IMR-90 (cell line): ENCODE measurements at regions of chr1 and their contacts with region 1.

Region 1: DNA sequence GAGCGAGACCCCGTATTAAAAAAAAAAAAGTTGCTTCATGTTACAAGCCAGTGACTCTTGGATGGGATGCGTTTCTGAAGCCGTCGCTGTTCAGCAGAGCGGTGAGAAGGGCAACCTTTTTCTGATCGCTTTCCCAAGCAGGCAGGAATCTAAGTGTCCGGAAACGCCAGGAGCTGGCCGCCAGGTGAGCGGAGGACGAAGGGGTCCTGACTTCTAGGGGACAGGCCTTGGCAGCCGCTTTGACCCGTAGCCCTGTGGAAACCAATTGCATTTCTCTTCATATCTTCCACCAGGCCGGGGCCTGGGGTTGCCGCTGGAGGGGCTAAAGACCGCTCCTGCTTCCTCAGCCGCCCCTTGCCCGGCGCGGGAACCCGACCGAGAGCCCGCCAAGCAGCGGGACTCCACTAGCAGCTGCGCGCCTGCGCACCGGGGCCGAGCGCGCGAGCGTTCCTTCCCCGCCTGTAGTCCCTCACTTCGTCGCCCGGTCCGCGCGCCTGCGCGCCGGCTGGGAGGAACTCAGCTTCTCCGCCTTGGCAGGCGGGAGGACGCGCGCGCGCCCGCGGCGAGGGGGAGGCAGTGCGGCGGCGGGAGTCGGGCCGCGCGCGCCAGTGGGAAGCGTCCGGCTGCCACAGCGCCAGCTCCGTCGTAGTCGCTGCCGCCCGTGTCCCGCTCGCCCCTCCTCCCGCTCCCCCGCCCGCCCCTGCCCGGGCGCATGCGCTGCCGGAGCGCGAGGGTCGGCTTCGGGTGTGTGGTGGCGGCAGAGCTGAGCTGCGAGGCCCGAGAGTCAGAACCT is at the start of gene SPEN:
- DNase-seq: peak; percentile 96
- ATAC-seq: peak; percentile 88
- H3K4me3 ChIP-seq: peak within 1 kb of the TSS; percentile 94
- H3K27ac ChIP-seq: peak within 1 kb of the TSS; percentile 88
- H3K4me1 ChIP-seq: no peaks in the 10 kb centered on the region
- H3K27me3 ChIP-seq: no peaks in the 10 kb centered on the region
- CTCF ChIP-seq: no peak
- POLR2A ChIP-seq: peak; percentile 61; the same call in 1 of the 2 replicates
- RAD21 ChIP-seq: peak; percentile 6; the same call in 1 of the 2 replicates
- total RNA-seq, gene SPEN: 15.8 and 20.3 TPM in 2 replicates

Region 2: DNA sequence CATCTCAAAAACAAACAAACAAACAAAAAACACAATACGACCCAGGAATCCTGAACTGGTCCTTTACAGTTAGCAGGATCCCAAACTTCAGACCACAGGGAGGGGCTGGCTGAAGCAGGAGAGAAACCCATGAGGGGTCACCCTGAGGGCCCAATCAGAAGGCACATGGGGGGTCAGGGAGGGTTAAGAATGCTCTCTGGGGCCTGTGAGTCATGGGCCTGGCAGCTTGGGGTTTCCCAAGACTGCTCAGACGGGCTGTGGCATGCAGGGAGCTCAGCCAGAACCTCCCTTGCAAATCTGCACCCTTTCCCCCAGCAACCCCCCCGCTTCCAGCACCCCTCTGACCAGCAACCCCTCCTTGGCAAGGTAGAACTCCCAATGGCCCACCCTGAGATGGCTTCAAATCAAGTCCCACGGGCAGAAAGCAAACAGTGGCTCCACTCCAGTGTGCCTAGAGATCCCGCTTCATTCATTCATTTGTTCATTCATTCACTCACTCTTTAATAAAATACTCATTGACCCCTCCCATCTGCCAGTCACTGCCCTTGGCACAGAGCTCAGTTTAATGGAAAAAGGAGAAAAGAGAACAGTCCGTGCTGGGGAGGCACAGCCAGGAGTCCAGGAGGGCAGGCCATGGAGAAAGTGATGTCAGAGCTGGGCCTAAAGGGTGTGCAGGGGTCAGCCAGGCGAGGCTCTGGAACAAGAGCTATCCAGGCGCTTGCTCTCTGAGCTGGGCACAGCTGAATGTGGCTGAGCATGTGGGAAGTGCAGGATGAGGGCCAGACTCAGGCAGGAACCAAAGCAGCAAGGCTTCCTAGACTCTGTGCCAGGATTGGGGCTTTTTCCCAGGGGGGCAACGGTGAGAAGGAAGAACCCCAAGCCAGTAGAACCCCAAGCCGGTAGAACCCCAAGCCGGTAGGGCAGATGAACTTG is 48.0 kb before region 1 on chr1:
- CTCF ChIA-PET with region 1: interaction called, 4 read pairs
- POLR2A ChIA-PET with region 1: no interaction called
- dilution Hi-C with region 1: no loop called
- in situ Hi-C with region 1: no loop called
- intact Hi-C with region 1: loop called (anchors 5 kb)
- DNase-seq: peak; percentile 96
- ATAC-seq: peak; percentile 86
- H3K4me3 ChIP-seq: no peak overlapping the region
- H3K27ac ChIP-seq: peak overlapping the region; percentile 81
- H3K4me1 ChIP-seq: peaks cover 43% of the 10 kb centered on the region
- H3K27me3 ChIP-seq: no peaks in the 10 kb centered on the region
- CTCF ChIP-seq: no peak
- POLR2A ChIP-seq: no peak
- RAD21 ChIP-seq: no peak

Region 3: GRCh38 chr1:15835741-15836510 is 11.4 kb before region 1 on chr1:
- CTCF ChIA-PET with region 1: no interaction called
- POLR2A ChIA-PET with region 1: interaction called, 3 read pairs
- dilution Hi-C with region 1: no loop called
- in situ Hi-C with region 1: no loop called
- intact Hi-C with region 1: loop called (anchors 1 kb)
- DNase-seq: peak; percentile 99
- ATAC-seq: peak; percentile 82
- H3K4me3 ChIP-seq: peak overlapping the region; percentile 68
- H3K27ac ChIP-seq: peak overlapping the region; percentile 85
- H3K4me1 ChIP-seq: peaks cover 2% of the 10 kb centered on the region; the same call in 1 of the 2 replicates
- H3K27me3 ChIP-seq: no peaks in the 10 kb centered on the region
- CTCF ChIP-seq: no peak
- POLR2A ChIP-seq: peak; percentile 85
- RAD21 ChIP-seq: no peak

Region 4: GRCh38 chr1:15885701-15886610 is 38.7 kb after region 1 on chr1:
- CTCF ChIA-PET with region 1: no interaction called
- POLR2A ChIA-PET with region 1: no interaction called
- dilution Hi-C with region 1: no loop called
- in situ Hi-C with region 1: no loop called
- intact Hi-C with region 1: loop called (anchors 5 kb)
- DNase-seq: peak; percentile 86
- ATAC-seq: peak; percentile 99
- H3K4me3 ChIP-seq: peak overlapping the region; percentile 40
- H3K27ac ChIP-seq: peak overlapping the region; percentile 90
- H3K4me1 ChIP-seq: peaks cover 4% of the 10 kb centered on the region
- H3K27me3 ChIP-seq: no peaks in the 10 kb centered on the region
- CTCF ChIP-seq: peak; percentile 35
- POLR2A ChIP-seq: no peak
- RAD21 ChIP-seq: peak; percentile 25; the same call in 1 of the 2 replicates

Region 5: GRCh38 chr1:15902882-15903281 is 55.6 kb after region 1 on chr1:
- CTCF ChIA-PET with region 1: interaction called, 3 read pairs
- POLR2A ChIA-PET with region 1: no interaction called
- dilution Hi-C with region 1: no loop called
- in situ Hi-C with region 1: no loop called
- intact Hi-C with region 1: loop called (anchors 5 kb)
- DNase-seq: peak; percentile 91
- ATAC-seq: peak; percentile 92
- H3K4me3 ChIP-seq: no peak overlapping the region
- H3K27ac ChIP-seq: no peak overlapping the region
- H3K4me1 ChIP-seq: peaks cover 12% of the 10 kb centered on the region
- H3K27me3 ChIP-seq: no peaks in the 10 kb centered on the region
- CTCF ChIP-seq: no peak
- POLR2A ChIP-seq: no peak
- RAD21 ChIP-seq: no peak

Region 6: DNA sequence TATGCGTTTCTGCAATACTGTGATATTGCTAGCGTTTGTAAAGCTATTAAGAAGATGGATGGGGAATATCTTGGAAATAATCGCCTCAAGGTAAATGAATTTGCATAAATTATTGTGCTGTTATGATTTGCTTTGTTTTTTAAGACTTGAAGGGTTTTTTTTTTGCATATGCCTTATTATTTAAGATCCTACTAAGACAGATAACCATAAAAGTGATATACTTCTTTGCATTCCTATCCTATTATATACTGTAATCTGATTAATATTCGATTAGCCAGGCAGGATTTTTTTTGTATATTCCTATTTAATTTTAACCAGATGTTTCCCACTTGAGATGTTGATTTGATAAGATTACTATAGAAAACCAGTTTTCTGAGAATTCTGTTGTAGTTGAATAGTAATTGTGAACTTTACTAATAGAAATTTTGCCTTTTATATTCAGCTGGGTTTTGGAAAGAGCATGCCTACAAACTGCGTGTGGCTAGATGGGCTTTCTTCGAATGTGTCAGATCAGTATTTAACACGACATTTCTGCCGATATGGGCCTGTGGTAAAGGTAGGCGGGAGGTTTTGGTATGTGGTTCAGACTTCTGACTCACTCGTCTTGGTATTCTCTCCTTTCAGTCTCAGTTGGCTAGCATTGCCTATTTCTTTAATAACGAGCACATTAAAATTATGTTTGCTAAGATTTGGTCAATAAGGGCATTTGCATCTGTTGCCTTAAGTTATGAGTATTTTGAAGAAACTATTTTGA is 71.8 kb after region 1 on chr1:
- CTCF ChIA-PET with region 1: no interaction called
- POLR2A ChIA-PET with region 1: interaction called, 4 read pairs
- dilution Hi-C with region 1: no loop called
- in situ Hi-C with region 1: no loop called
- intact Hi-C with region 1: loop called (anchors 5 kb)
- DNase-seq: peak; percentile 84
- ATAC-seq: peak; percentile 69
- H3K4me3 ChIP-seq: no peak overlapping the region
- H3K27ac ChIP-seq: no peak overlapping the region
- H3K4me1 ChIP-seq: peaks cover 12% of the 10 kb centered on the region
- H3K27me3 ChIP-seq: no peaks in the 10 kb centered on the region
- CTCF ChIP-seq: no peak
- POLR2A ChIP-seq: no peak
- RAD21 ChIP-seq: no peak

Region 7: GRCh38 chr1:15994590-15995351 is 147.5 kb after region 1 on chr1:
- CTCF ChIA-PET with region 1: no interaction called
- POLR2A ChIA-PET with region 1: no interaction called
- dilution Hi-C with region 1: no loop called
- in situ Hi-C with region 1: no loop called
- intact Hi-C with region 1: loop called (anchors 1 kb)
- DNase-seq: peak; percentile 56
- ATAC-seq: peak; percentile 99
- H3K4me3 ChIP-seq: no peak overlapping the region
- H3K27ac ChIP-seq: no peak overlapping the region
- H3K4me1 ChIP-seq: peaks cover 2% of the 10 kb centered on the region; the same call in 1 of the 2 replicates
- H3K27me3 ChIP-seq: peaks cover 13% of the 10 kb centered on the region; the same call in 1 of the 2 replicates
- CTCF ChIP-seq: peak; percentile 90
- POLR2A ChIP-seq: no peak
- RAD21 ChIP-seq: peak; percentile 91

Region 8: DNA sequence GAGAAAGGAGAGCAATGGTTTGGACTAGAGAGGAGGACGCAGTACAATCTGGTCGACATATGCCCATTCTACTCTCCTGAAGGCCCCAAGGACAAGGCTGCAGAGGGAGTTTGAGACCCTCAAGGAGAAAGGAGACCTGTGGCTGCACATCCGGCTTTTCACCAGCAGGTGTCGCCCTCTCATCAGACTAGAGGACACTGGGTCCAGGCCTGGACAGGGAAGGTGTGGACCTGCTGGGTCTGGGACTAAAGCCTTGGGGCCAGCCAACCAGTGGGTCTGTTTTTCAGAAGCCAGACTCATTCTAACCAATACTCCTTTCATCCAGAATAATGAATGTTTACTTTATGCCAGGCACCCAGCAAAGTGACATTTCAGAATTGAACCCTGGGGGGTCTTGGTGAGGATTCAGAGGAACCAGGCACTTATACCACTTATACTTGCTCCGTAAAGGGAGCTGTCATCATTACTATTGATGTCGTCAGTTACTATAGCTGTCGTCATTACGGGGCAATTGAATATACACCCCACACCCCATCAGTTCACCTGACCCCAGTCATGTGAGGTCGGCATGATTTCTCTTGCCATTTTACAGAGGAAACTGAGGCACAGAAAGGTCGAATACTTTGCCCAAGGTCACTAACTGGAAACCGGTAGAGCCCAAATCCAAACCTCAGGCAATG is 161.9 kb after region 1 on chr1:
- CTCF ChIA-PET with region 1: no interaction called
- POLR2A ChIA-PET with region 1: no interaction called
- dilution Hi-C with region 1: no loop called
- in situ Hi-C with region 1: no loop called
- intact Hi-C with region 1: no loop called
- DNase-seq: peak; percentile 67
- ATAC-seq: peak; percentile 79
- H3K4me3 ChIP-seq: no peak overlapping the region
- H3K27ac ChIP-seq: no peak overlapping the region
- H3K4me1 ChIP-seq: peaks cover 9% of the 10 kb centered on the region
- H3K27me3 ChIP-seq: peaks cover 2% of the 10 kb centered on the region; the same call in 1 of the 2 replicates
- CTCF ChIP-seq: peak; percentile 97
- POLR2A ChIP-seq: 0 out of 2 replicates have a peak, but pooled peaks have one; percentile 23
- RAD21 ChIP-seq: peak; percentile 98